Psoas muscle (tissue), 8 donors: ENCODE measurements at regions of chr19 and their contacts with region 1.

Region 1: GRCh38 chr19:55160128-55160985 is 2.8 kb upstream of the TNNI3 start:
- DNase-seq: peak; percentile 84 to 92
- ATAC-seq: peak; percentile 80 to 84 (median 83)
- H3K4me3 ChIP-seq: no peak overlapping the region
- H3K27ac ChIP-seq: no peak overlapping the region
- H3K4me1 ChIP-seq: no peaks in the 10 kb centered on the region
- H3K27me3 ChIP-seq: peaks cover 0 to 33% (median 4%) of the 10 kb centered on the region in 3 donors
- CTCF ChIP-seq: peak; percentile 70

Region 2: DNA sequence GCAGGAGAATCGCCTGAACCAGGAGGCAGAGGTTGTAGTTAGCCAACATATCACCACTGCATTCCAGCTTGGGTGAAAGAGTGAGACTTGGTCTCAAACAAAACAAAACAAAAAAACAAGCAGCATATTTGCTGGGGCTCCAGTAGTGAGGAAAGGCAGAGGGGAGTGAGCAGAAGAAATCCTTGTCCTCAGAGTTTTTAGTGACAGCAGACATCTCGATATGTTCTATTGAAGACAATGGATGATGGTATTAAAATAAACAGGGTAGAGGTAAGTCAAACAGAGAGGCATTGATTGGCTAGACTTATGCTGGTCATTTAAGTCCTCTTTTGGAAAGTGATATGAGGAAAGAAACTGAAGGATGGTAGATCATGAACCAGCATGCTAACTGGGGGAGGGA is 232.1 kb before region 1 on chr19:
- intact Hi-C with region 1: no loop called
- DNase-seq: no peak
- ATAC-seq: no peak
- H3K4me3 ChIP-seq: no peak overlapping the region
- H3K27ac ChIP-seq: no peak overlapping the region
- H3K4me1 ChIP-seq: no peaks in the 10 kb centered on the region
- H3K27me3 ChIP-seq: no peaks in the 10 kb centered on the region
- CTCF ChIP-seq: no peak

Region 3: GRCh38 chr19:55088543-55089341 is 71.6 kb before region 1 on chr19:
- intact Hi-C with region 1: loop called (anchors 2 kb)
- DNase-seq: peak; percentile 80 to 89
- ATAC-seq: peak in 3 of 4 donors; percentile 30 to 62 (median 49)
- H3K4me3 ChIP-seq: no peak overlapping the region
- H3K27ac ChIP-seq: no peak overlapping the region
- H3K4me1 ChIP-seq: peaks cover 20% of the 10 kb centered on the region
- H3K27me3 ChIP-seq: peaks cover 0 to 48% (median 14%) of the 10 kb centered on the region in 3 donors
- CTCF ChIP-seq: peak; percentile 75

Region 4: GRCh38 chr19:55113570-55114039 is 46.8 kb before region 1 on chr19:
- intact Hi-C with region 1: no loop called
- DNase-seq: peak; percentile 81 to 91
- ATAC-seq: peak in 1 of 4 donors; percentile 38
- H3K4me3 ChIP-seq: peak overlapping the region; percentile 41
- H3K27ac ChIP-seq: peak overlapping the region; percentile 66
- H3K4me1 ChIP-seq: peaks cover 15% of the 10 kb centered on the region
- H3K27me3 ChIP-seq: no peaks in the 10 kb centered on the region
- CTCF ChIP-seq: no peak

Region 5: GRCh38 chr19:55178781-55179599 is 18.6 kb after region 1 on chr19:
- intact Hi-C with region 1: no loop called
- DNase-seq: peak; percentile 61 to 74
- ATAC-seq: peak; percentile 76 to 93 (median 84)
- H3K4me3 ChIP-seq: peak overlapping the region; percentile 56
- H3K27ac ChIP-seq: no peak overlapping the region
- H3K4me1 ChIP-seq: peaks cover 7% of the 10 kb centered on the region
- H3K27me3 ChIP-seq: peaks cover 0 to 92% (median 38%) of the 10 kb centered on the region in 3 donors
- CTCF ChIP-seq: no peak